Naive thymus-derived CD8-positive, alpha-beta T cell (primary cell): ENCODE measurements at regions of chr19 and their contacts with region 1.

Region 1: DNA sequence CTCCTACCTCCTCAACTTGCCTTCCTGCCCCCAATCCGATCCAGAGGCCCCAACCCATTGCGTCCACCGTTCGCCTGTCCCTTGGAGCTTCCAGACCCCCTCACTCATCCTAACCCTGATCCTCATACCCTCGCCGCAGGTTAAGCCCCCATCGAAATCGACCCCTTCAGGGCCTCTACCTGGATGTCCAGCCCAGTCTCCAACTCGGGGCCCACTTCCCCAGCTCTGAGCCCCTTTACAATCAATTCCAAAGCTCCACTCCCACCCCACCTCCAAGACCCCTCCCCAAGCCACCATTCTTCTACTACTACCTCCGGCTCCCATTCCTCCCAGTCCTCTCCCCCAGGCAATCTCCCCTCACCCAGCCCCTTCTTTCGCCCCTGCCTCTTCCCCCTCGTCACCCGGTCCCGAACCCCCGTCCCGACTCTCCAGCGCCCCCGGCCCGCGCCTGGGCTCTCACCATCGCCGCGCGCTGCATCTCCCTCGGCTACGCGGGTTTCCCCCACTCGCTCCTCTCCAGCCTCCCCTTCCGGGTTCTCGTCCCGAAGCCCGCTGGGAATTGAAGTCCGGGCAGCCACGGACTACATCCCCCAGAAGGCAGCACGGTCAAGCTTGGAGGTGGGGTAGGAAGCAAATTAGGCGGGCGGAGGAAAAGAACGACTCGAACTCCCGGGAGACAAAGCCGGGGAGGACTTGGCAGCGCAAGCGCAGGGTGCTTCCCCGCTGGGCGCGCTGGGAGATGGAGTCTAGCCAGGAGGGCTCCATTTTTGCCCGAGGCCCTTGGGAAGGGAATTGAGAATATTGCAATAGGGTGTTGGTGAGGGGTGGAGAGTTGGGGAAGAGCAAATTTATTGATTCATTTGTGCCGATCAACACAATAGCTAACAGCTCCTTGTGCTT is at the start of gene FBXO46:
- DNase-seq: peak; percentile 74 to 95 (median 90)
- ATAC-seq: peak; percentile 99 to 100
- H3K4me3 Mint-ChIP-seq: peak within 1 kb of the TSS; percentile 90 to 99 (median 94)
- H3K27ac Mint-ChIP-seq: peak within 1 kb of the TSS; percentile 84 to 96 (median 94)
- H3K4me1 Mint-ChIP-seq: peaks cover 20 to 46% (median 37%) of the 10 kb centered on the region in 4 donors
- H3K27me3 Mint-ChIP-seq: no peaks in the 10 kb centered on the region
- polyA plus RNA-seq, gene FBXO46: 12.4 to 15.2 (median 12.5) TPM

Region 2: DNA sequence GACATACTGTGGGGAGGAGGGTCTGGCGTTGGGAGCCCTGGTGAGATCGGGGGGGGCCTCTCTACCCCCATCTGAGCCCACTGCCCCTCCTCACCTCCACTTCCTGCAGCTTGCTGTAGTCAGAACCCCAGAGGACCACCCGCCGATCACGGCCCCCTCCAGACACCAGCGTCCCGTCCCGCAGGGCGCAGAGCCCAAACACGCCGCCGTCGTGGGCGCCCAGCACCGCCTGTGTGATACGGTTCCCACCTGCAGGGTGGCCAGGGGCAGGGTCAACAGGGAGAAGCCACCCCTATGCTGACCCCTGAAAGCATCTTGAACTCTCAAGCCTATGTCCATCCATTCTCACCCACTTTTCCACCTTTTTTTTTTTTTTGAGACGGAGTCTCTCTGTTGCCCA is 109.2 kb before region 1 on chr19:
- POLR2A ChIA-PET with region 1: no interaction called
- DNase-seq: no peak
- ATAC-seq: no peak
- H3K4me3 Mint-ChIP-seq: no peak overlapping the region
- H3K27ac Mint-ChIP-seq: no peak overlapping the region
- H3K4me1 Mint-ChIP-seq: peaks cover 0 to 8% (median 2%) of the 10 kb centered on the region in 4 donors
- H3K27me3 Mint-ChIP-seq: no peaks in the 10 kb centered on the region

Region 3: DNA sequence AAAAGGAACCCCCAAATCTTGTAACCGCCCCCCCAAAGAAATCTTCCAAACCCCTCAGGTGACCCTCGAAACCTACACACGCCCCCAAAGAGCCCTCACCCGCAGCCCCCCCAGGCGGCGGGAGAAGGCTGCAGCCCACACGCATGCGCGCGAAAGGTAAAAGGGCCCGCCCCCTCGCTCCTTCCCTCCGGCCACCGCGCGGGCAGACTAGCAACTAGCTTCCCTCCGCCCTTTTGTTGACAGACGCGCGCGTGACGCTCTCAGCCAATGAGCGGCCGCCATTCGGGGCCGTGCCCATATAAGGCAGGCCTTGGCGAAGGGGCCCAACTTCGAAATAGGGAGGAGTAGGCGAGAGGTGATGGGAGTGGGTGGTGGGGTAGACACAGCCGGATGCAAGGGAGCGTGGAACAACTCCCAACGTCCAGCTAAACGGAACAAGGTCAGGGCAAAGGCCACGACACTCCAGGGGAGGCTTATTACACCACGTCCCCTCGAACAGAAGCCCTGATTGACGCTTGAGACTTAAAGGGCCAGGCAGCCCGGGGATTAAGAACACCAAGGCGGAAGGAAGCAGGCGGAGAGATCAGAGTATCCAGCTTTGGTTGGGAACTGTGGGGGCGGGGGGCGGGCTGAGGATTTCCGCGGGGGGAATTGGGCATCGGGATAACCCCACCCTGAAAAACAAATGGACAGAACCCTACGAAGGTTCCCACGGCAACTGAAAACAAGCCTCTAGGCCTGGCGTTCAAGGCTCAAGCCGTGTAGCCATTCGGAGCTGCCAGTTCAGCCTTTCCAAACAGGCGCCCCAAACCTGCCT is 13.3 kb before region 1 on chr19:
- POLR2A ChIA-PET with region 1: interaction called, 51 read pairs
- DNase-seq: peak; percentile 93 to 99 (median 98)
- ATAC-seq: peak; percentile 96
- H3K4me3 Mint-ChIP-seq: peak overlapping the region; percentile 87 to 99 (median 97)
- H3K27ac Mint-ChIP-seq: peak overlapping the region; percentile 94 to 99 (median 96)
- H3K4me1 Mint-ChIP-seq: peaks cover 22 to 56% (median 49%) of the 10 kb centered on the region in 4 donors
- H3K27me3 Mint-ChIP-seq: no peaks in the 10 kb centered on the region